HEK293 (cell line): ENCODE measurements at regions of chr6 and their contacts with region 1.

Region 1: DNA sequence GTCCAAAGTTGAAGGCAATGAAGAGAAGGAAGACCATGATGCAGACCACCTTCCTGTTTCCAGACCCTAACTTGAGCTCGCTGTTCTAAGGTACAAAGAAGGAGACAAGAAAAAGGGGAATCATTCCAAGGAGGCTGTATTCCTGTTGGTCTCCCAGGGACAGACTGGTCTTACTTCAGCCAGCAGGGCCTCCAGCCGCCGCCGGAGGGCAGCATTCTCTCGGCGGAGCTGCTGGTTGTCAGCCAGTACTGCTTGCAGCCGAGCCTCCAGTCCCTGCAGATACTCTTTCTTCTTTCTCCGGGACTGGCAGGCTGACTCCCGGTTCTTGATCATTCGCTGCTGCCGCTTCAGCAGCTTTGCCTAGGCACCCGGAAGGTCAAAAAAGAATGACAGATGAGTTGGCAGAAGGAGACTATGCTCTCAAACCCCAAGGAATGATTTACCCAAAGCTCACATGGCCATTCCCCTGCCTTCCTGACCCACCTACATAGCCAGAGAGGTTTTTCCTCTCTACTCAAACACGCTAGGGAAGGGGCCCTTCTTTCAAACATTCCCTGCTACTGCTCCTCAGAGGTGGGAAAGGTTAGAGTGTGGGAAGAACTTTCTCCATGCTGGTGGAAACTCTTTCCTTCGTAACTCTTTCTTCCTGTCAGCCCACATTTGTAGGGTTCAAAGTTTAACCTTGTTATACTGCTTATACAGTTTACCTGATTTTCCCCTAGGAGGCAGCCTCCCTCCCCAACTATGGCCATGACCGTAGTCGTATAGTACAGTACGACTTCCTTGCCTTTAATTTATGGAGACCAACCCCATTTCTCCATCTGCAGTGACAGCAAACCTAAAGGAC is 9.0 kb downstream of the ATF6B start:
- H3K4me3 ChIP-seq: no peak overlapping the region
- H3K27ac ChIP-seq: no peak overlapping the region
- H3K4me1 ChIP-seq: no peaks in the 10 kb centered on the region
- CTCF ChIP-seq: peak; percentile 87

Region 2: GRCh38 chr6:32047850-32048766 is 70.9 kb before region 1 on chr6:
- CTCF ChIA-PET with region 1: interaction called, 32 read pairs
- POLR2A ChIA-PET with region 1: interaction called, 8 read pairs
- H3K4me3 ChIP-seq: no peak overlapping the region
- H3K27ac ChIP-seq: no peak overlapping the region
- H3K4me1 ChIP-seq: no peaks in the 10 kb centered on the region
- CTCF ChIP-seq: peak; percentile 77

Region 3: DNA sequence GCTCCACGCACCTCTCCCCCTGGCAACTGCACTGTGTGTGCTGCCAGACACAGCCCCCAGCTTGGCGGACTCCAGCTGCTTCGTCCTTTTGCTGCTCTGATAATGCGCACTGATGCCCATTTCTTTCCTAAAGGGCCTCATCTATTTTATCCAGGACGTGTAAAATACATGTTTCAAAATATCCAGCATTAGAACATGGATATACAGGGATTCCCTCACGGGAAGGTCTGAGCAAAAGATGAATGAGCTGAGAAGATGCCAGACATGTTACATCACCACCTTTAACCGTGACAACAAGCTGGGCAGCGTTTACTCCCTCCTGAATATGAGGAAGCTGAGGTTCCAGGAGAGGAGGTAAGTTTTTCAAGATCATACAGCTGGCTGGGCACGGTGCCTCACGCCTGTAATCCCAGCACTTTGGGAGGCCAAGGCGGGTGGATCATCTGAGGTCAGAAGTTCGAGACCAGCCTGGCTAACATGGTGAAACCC is 42.6 kb before region 1 on chr6:
- CTCF ChIA-PET with region 1: interaction called, 10 read pairs
- POLR2A ChIA-PET with region 1: no interaction called
- H3K4me3 ChIP-seq: no peak overlapping the region
- H3K27ac ChIP-seq: no peak overlapping the region
- H3K4me1 ChIP-seq: no peaks in the 10 kb centered on the region
- CTCF ChIP-seq: no peak

Region 4: DNA sequence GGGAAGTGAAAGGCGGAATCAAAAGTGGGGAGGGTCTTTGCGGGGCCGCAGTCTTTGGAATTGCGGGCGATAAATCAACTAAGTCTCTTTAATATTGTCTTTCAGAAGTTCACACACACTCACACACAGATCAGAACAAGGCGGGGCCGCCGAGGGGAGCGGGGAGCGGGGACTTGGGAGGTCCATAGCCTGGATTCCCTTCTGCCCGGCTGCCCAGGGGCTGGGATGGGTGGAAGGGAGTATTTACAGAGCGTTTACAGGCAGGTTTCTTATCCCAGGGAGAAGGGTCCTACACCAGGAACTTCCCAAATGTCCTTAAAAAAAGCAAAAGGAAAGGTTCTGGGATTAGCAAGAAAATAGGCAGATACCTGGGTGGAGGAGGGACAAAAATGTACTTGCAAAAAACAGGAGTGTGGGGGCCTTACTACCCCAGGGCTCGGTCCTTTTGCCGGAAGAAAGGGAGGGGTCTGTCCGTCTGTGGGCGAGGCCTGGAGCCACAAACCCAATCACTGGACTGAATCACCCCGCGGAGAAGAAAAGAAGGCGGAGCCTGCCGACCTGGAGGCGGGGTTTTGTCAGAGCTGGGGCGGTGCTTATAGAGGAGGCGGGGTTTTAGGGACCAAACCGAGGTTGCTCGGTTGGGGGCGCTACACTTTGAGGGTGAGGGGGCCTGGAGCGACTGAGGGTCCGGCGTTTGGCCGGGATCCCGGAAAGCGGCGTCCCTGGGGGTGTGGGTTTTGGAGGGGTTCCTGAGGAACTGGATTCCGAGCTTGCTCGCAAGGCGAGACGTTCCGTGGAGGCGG is 29.5 kb after region 1 on chr6:
- CTCF ChIA-PET with region 1: interaction called, 14 read pairs
- POLR2A ChIA-PET with region 1: interaction called, 3 read pairs
- H3K4me3 ChIP-seq: no peak overlapping the region
- H3K27ac ChIP-seq: no peak overlapping the region
- H3K4me1 ChIP-seq: peaks cover 9% of the 10 kb centered on the region; the same call in 1 of the 2 replicates
- CTCF ChIP-seq: no peak

Region 5: DNA sequence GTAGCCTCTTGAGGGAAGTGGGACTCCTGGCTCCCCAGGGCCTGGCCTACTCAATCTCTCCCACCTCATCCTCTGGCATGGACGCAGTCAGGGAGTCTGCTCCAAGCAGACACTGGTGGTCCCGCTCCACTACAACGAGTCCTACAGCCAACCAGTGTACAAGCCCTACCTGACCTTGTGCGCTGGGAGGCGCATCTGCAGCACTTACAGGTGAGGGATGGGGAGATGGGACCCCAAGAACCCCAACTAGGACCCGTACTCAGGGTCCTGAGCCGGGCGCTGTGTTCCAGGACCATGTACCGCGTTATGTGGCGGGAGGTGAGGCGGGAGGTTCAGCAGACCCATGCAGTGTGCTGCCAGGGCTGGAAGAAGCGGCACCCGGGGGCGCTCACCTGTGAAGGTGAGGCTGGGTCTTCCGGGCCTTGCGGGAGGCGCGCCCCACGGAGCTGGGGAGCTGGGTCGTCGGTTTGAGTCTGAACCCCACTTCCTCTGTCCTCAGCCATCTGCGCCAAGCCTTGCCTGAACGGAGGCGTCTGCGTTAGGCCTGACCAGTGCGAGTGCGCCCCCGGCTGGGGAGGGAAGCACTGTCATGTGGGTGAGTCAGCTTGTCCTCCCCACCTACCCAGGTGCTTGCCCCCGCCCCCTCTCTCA is 47.5 kb after region 1 on chr6:
- CTCF ChIA-PET with region 1: interaction called, 19 read pairs
- POLR2A ChIA-PET with region 1: no interaction called
- H3K4me3 ChIP-seq: no peak overlapping the region
- H3K27ac ChIP-seq: no peak overlapping the region
- H3K4me1 ChIP-seq: no peaks in the 10 kb centered on the region
- CTCF ChIP-seq: no peak

Region 6: GRCh38 chr6:32195652-32195901 is 76.6 kb after region 1 on chr6:
- CTCF ChIA-PET with region 1: interaction called, 25 read pairs
- POLR2A ChIA-PET with region 1: interaction called, 5 read pairs
- H3K4me3 ChIP-seq: peak overlapping the region; percentile 72
- H3K27ac ChIP-seq: peak overlapping the region; percentile 97
- H3K4me1 ChIP-seq: peaks cover 4% of the 10 kb centered on the region
- CTCF ChIP-seq: peak; percentile 85